ENCODE measurements at regions of chr21 and their contacts with region 1.

Region 1: DNA sequence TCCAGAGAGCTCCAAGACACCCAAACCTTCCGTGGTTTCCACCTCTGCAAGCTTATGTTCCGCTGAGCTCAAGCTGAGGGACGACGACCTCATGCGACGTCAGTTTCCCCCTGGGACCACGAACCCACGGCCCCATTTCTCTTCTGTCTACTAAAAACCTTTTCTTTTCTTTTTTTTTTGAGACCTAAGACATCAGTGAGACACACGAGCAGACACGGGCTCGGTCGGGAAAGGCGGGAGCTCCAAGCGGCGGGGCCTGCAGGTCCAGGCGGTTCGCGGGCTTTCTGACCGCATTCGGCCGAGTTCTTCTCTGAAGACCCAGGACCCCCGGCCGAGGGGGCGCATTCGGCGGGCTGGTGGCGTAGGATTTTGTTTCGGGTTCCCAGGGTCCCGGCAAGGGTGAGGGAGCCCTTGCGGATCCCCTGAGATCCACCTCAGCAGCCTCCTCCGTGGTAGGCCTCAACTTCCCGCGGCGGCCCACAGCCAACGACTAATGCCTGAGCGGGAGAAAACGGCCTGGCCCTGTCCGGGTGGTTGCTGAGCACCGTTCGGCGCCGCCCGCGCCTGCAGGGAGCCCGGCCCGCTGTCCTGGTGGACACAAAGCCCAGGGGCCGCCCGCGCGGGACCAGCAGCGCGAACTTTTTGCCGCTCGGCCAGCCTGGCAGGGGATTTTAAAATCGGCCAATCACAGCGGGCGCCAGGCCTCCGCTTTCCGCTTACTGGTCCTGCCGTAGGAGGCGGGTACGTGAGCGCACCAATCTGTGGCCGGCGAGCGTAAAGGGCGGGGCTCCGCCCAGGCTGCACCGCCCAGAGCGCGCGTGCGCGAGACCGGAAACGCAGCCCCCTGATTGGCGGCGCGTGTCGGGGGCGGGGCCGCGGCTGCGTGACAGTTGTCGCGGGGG is at the start of gene C21orf58:
- DNase-seq: peak; percentile 99
- H3K4me3 ChIP-seq: peak within 1 kb of the TSS; percentile 87 to 99 (median 94)
- H3K27ac ChIP-seq: peak within 1 kb of the TSS; percentile 94 to 99 (median 98)
- H3K4me1 ChIP-seq: peaks cover 0 to 34% (median 27%) of the 10 kb centered on the region in 4 donors
- H3K27me3 ChIP-seq: no peaks in the 10 kb centered on the region
- CTCF ChIP-seq: no peak
- EP300 ChIP-seq: no peak
- POLR2A ChIP-seq: no peak
- total RNA-seq, gene C21orf58: 1.4 to 4.7 (median 1.9) TPM

Region 2: DNA sequence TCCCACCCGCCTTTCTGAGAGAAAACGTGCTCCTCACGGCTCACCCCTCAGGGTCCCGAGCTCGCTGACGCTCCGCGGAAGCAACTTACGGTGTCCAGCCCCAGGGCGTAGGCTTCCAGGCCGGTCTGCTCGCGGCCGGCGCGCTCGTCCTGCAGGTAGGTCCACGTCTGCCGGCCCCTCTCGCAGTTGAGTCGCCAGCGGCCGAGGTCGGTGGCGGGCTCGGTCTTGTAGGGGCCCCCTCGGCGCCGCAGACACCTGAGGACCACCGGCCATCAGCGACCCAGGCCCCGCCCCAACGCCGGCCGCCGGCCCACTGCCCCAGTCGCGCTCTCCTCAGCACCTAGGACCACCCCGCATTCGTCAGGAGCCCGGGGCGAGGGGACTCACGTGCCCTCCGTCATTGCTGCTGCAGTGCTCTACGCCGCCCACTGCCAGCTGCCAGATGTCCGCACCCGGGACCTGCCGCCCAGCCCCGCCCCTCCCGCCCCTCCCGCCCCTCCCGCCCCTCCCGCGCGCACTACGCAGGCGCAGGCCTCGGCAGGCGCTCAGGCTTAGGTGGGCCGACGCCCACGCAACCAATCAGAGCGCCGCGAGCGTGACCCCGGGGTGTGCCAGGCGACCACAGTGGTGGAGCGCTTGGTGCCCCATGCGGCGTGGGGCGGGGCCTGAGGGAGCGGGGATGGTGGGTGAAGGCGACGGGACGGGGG is 95.0 kb before region 1 on chr21 and contains the start of gene LSS:
- intact Hi-C with region 1: loop called (anchors 2 kb)
- DNase-seq: peak; percentile 99
- H3K4me3 ChIP-seq: peak within 1 kb of the TSS; percentile 74 to 100 (median 89)
- H3K27ac ChIP-seq: peak within 1 kb of the TSS; percentile 82 to 90 (median 90)
- H3K4me1 ChIP-seq: peaks cover 0 to 41% (median 33%) of the 10 kb centered on the region in 4 donors
- H3K27me3 ChIP-seq: no peaks in the 10 kb centered on the region
- CTCF ChIP-seq: no peak
- EP300 ChIP-seq: peak in 1 of 4 donors; percentile 53
- POLR2A ChIP-seq: peak in 1 of 2 donors; percentile 57
- total RNA-seq, gene LSS: 47.6 to 63.7 (median 57.0) TPM

Region 3: GRCh38 chr21:46458315-46459023 is 135.0 kb after region 1 on chr21 and contains the start of gene DIP2A:
- intact Hi-C with region 1: loop called (anchors 5 kb)
- DNase-seq: peak; percentile 98
- H3K4me3 ChIP-seq: peak within 1 kb of the TSS; percentile 61 to 98 (median 94)
- H3K27ac ChIP-seq: peak within 1 kb of the TSS; percentile 88 to 96 (median 92)
- H3K4me1 ChIP-seq: peaks cover 0 to 63% (median 56%) of the 10 kb centered on the region in 4 donors
- H3K27me3 ChIP-seq: no peaks in the 10 kb centered on the region
- CTCF ChIP-seq: no peak
- EP300 ChIP-seq: no peak
- POLR2A ChIP-seq: peak; percentile 89 to 91
- total RNA-seq, gene DIP2A: 22.8 to 49.3 (median 25.5) TPM

Measured in sigmoid colon (tissue), 7 donors.